ENCODE measurements at regions of chr12 and their contacts with region 1.

Region 1: DNA sequence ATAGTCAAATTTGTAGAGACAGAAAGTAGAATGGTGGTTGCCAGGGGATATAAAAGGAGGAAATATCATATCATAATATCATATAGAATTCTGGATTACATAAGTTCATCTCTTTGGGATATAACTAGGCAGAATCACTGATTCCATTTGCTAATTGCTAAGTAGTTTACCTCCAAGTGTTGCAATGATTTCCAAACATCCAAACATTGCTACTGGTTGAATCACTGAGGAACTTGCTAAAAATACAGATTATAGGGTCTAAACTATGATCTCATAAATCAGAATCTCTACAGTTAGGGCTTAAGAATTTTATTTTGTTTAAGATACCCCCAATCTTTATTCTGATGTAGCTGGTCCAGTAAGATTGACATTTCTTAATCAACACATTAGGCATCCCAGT is 16.1 kb upstream of the TAS2R42 start:
- DNase-seq: peak; percentile 52
- H3K4me3 ChIP-seq: no peak overlapping the region
- H3K27ac ChIP-seq: no peak overlapping the region
- H3K4me1 ChIP-seq: no peaks in the 10 kb centered on the region; the same call in 1 of the 2 replicates
- H3K27me3 ChIP-seq: no peaks in the 10 kb centered on the region

Region 2: DNA sequence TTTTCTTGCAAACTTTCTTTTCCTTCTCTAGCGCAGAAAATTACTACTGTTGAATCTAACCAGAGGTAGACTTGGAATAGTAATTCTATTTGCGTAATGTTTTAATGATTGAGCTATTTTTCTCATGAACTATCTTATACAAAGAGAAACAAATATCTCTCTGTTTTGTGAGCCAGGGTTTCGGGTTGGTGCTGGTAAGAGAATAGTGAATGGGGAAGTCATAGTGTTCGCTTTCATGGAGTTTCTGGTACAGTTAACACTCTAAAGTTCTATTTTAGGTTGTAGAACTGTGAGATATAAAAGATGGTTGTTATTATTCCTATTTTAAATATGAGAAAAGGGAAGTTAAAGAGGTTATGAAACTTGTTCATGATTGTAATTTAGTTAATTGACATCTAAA is 1210.5 kb before region 1 on chr12:
- in situ Hi-C with region 1: no loop called
- DNase-seq: no peak
- H3K4me3 ChIP-seq: no peak overlapping the region
- H3K27ac ChIP-seq: no peak overlapping the region
- H3K4me1 ChIP-seq: no peaks in the 10 kb centered on the region
- H3K27me3 ChIP-seq: peaks cover 27% of the 10 kb centered on the region

Region 3: GRCh38 chr12:10771132-10771733 is 431.6 kb before region 1 on chr12:
- in situ Hi-C with region 1: loop called (anchors 10 kb)
- DNase-seq: peak; percentile 53
- H3K4me3 ChIP-seq: no peak overlapping the region
- H3K27ac ChIP-seq: no peak overlapping the region
- H3K4me1 ChIP-seq: no peaks in the 10 kb centered on the region
- H3K27me3 ChIP-seq: peaks cover 80% of the 10 kb centered on the region

Region 4: DNA sequence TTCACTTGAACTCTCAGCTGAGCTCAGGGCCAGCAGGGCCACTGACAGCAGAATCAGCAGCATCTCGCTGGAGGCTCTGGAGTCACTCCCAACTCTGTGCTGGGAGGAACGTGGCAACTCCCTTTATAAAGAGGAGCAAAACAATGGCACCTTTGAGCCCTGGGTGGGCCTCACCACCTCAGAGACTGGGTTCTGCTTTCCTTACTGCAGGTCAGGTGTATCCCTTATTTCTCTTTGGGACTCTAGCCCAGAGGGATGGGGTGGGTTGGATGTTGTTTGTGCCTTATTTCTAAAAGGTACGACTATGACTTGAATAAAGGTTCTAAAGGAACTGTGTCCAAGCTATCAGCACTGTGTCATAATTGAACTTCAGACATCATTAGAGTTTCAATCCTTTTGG is 107.5 kb after region 1 on chr12 and contains the start of gene PRB4:
- in situ Hi-C with region 1: no loop called
- DNase-seq: no peak
- H3K4me3 ChIP-seq: no peak within 1 kb of the TSS
- H3K27ac ChIP-seq: no peak within 1 kb of the TSS
- H3K4me1 ChIP-seq: no peaks in the 10 kb centered on the region
- H3K27me3 ChIP-seq: no peaks in the 10 kb centered on the region
- total RNA-seq, gene PRB4: not detected in 2 replicates

Region 5: GRCh38 chr12:11812586-11813427 is 610.0 kb after region 1 on chr12:
- in situ Hi-C with region 1: no loop called
- DNase-seq: peak; percentile 52
- H3K4me3 ChIP-seq: peak overlapping the region; percentile 51
- H3K27ac ChIP-seq: peak overlapping the region; percentile 10; the same call in 1 of the 2 replicates
- H3K4me1 ChIP-seq: peaks cover 30% of the 10 kb centered on the region
- H3K27me3 ChIP-seq: no peaks in the 10 kb centered on the region

Measured in GM23248 (cell line).